Transverse colon (tissue), 4 donors: ENCODE measurements at regions of chr11 and their contacts with region 1.

Region 1: GRCh38 chr11:64025205-64025604 is 10.5 kb upstream of the FLRT1 start:
- DNase-seq: no peak
- H3K4me3 ChIP-seq: no peak overlapping the region
- H3K27ac ChIP-seq: no peak overlapping the region
- H3K4me1 ChIP-seq: peaks cover 0 to 6% (median 3%) of the 10 kb centered on the region in 4 donors
- H3K27me3 ChIP-seq: peaks cover 14% of the 10 kb centered on the region
- CTCF ChIP-seq: no peak
- EP300 ChIP-seq: no peak
- POLR2A ChIP-seq: no peak

Region 2: GRCh38 chr11:63783925-63784592 is 241.1 kb before region 1 on chr11:
- in situ Hi-C with region 1: no loop called
- intact Hi-C with region 1: no loop called
- DNase-seq: no peak
- H3K4me3 ChIP-seq: no peak overlapping the region
- H3K27ac ChIP-seq: no peak overlapping the region
- H3K4me1 ChIP-seq: no peaks in the 10 kb centered on the region
- H3K27me3 ChIP-seq: no peaks in the 10 kb centered on the region
- CTCF ChIP-seq: no peak
- EP300 ChIP-seq: no peak
- POLR2A ChIP-seq: no peak

Region 3: GRCh38 chr11:63945477-63946163 is 79.6 kb before region 1 on chr11:
- in situ Hi-C with region 1: no loop called
- intact Hi-C with region 1: no loop called
- DNase-seq: peak; percentile 75
- H3K4me3 ChIP-seq: no peak overlapping the region
- H3K27ac ChIP-seq: peak overlapping the region; percentile 21 to 73 (median 60)
- H3K4me1 ChIP-seq: peaks cover 12 to 45% (median 13%) of the 10 kb centered on the region in 4 donors
- H3K27me3 ChIP-seq: no peaks in the 10 kb centered on the region
- CTCF ChIP-seq: peak; percentile 72 to 93 (median 73)
- EP300 ChIP-seq: no peak
- POLR2A ChIP-seq: no peak

Region 4: GRCh38 chr11:64049509-64049908 is 24.3 kb after region 1 on chr11:
- in situ Hi-C with region 1: no loop called
- intact Hi-C with region 1: loop called (anchors 1 kb)
- DNase-seq: no peak
- H3K4me3 ChIP-seq: no peak overlapping the region
- H3K27ac ChIP-seq: no peak overlapping the region
- H3K4me1 ChIP-seq: no peaks in the 10 kb centered on the region
- H3K27me3 ChIP-seq: no peaks in the 10 kb centered on the region
- CTCF ChIP-seq: no peak
- EP300 ChIP-seq: no peak
- POLR2A ChIP-seq: no peak